Dendritic cell treated with granulocyte-macrophage colony-stimulating factor and Interleukin-4, amounts not matched to agents 40 ng/mL and 50 ng/mL, for 4 days (primary cell): ENCODE measurements at regions of chr1 and their contacts with region 1.

Region 1: GRCh38 chr1:182391362-182392044 is at the start of gene GLUL:
- H3K4me3 Mint-ChIP-seq: peak within 1 kb of the TSS; percentile 100
- H3K27ac Mint-ChIP-seq: peak within 1 kb of the TSS; percentile 100
- H3K4me1 Mint-ChIP-seq: peaks cover 68% of the 10 kb centered on the region
- H3K27me3 Mint-ChIP-seq: no peaks in the 10 kb centered on the region

Region 2: DNA sequence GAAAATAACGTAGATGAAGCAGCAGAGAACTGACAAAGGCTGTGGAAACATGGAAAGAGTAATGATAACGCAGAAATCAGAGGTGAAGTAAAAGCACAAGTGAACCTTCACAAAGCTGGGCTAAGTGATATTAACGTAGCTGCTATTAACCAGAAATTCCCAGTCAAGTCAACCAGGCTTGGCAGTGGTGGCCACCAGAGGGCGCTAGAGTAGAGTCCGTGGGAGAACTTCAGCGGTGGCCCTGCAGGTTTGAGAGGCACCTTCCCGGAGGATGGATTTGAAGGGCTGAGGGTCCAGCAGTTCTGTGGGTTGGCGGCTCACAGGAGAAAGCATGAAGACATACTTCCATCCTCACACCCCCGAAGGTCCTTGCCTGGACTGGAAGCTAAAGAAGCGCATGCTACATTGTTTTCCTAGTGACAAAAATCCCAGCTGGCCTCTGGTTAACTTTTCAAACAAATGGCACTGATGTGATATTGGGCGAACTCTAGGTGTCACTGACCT is 248.3 kb before region 1 on chr1:
- intact Hi-C with region 1: loop called (anchors 1 kb)
- H3K4me3 Mint-ChIP-seq: peak overlapping the region; percentile 39
- H3K27ac Mint-ChIP-seq: peak overlapping the region; percentile 98
- H3K4me1 Mint-ChIP-seq: peaks cover 47% of the 10 kb centered on the region
- H3K27me3 Mint-ChIP-seq: no peaks in the 10 kb centered on the region

Region 3: DNA sequence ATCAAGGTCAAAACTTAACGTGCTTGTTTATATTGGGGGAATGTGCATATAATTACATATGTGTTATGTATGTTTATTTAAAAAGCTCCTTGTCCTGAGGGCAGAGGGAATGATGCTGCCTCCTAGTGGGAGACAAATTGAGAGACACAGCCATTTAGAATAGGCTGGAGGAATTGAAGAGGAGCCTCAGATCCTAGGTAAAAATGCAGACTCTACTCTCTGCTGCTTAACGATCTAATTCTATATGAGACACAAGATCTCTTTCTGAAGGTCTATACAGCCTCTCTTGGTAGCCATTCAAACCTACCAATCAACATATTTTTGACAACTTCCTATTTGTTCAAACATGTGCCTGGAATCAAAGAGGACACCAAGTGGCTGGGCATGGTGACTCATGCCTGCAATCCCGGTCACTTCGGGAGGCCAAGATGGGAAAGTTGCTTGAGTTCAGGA is 193.4 kb before region 1 on chr1:
- intact Hi-C with region 1: loop called (anchors 1 kb)
- H3K4me3 Mint-ChIP-seq: no peak overlapping the region
- H3K27ac Mint-ChIP-seq: peak overlapping the region; percentile 73
- H3K4me1 Mint-ChIP-seq: peaks cover 30% of the 10 kb centered on the region
- H3K27me3 Mint-ChIP-seq: no peaks in the 10 kb centered on the region

Region 4: GRCh38 chr1:182588500-182589452 is 197.3 kb after region 1 on chr1 and contains the start of gene RNASEL:
- intact Hi-C with region 1: loop called (anchors 5 kb)
- H3K4me3 Mint-ChIP-seq: peak within 1 kb of the TSS; percentile 100
- H3K27ac Mint-ChIP-seq: peak within 1 kb of the TSS; percentile 98
- H3K4me1 Mint-ChIP-seq: peaks cover 44% of the 10 kb centered on the region
- H3K27me3 Mint-ChIP-seq: no peaks in the 10 kb centered on the region

Region 5: DNA sequence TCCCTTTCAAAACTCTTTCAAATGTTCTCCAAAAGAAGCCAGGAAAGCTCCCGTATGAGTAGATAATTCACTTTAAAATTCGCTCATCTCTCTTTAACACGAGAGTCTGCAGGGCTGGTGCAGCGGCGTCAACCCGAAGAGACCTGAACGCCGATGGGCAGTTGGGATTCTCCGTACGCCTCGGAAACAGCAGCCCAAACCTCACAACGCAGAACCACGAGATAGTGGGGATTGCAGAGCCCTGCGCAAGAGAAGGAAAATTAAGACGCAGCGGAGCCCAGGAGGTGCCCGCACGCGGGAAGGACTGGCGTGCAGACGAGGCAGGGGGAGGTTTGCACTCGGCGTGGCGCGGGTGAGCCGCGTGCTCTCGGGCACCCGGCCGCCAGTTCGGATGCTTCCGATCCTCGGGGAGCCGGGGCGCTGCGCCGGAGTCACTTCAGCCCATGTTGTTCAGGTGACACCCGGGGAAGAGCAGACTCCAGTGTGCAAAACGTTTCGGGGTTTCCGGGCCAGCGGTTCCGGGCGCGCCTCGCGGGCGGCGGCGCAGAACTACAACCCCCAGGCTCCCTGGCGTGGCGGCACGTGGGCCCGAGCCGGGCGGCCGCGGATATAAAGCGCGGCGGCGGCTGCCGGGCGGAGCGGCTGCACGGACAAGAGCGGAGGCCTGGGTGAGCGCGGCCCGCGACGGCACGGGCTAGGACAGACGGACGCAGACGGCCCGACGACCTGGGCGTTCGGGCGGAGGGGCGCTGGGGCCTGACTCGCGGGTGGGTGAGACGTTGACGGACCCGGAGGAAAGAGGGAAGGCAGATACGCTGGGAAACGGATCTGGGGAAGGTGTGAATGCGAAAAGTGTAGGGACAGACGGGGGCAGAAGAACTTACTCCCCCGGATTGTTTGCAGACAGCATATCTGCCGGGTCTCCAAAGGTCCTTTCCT is 397.9 kb after region 1 on chr1 and contains the start of gene NPL:
- intact Hi-C with region 1: loop called (anchors 5 kb)
- H3K4me3 Mint-ChIP-seq: peak within 1 kb of the TSS; percentile 98
- H3K27ac Mint-ChIP-seq: peak within 1 kb of the TSS; percentile 93
- H3K4me1 Mint-ChIP-seq: peaks cover 56% of the 10 kb centered on the region
- H3K27me3 Mint-ChIP-seq: peaks cover 10% of the 10 kb centered on the region